Left ventricle myocardium inferior (tissue), 1 donor: ENCODE measurements at regions of chr17 and their contacts with region 1.

Region 1: DNA sequence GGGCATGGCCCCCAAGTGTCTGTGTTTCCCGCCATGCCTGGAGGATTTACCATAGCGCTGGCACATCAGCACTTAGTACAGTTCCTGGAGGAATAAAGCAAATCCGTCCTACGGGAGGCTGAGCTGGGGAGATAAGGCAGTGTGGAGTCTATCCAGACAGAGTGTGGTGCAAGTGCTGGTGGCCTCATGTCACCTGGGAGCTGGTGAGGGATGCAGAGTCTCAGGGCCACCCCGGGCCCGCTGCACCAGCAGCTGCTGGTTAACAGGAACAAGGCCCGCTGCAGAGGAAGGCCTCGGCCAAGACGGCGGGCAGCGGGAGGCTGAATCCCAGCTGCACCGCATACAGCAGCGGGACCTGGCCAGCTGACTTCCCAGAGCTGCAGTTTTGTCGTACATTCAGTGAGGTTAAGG is 57.3 kb upstream of the CDC42EP4 start:
- DNase-seq: peak; percentile 63
- H3K4me3 ChIP-seq: no peak overlapping the region
- H3K27ac ChIP-seq: peak overlapping the region; percentile 54
- H3K4me1 ChIP-seq: peaks cover 36% of the 10 kb centered on the region
- H3K27me3 ChIP-seq: peaks cover 7% of the 10 kb centered on the region
- CTCF ChIP-seq: no peak

Region 2: DNA sequence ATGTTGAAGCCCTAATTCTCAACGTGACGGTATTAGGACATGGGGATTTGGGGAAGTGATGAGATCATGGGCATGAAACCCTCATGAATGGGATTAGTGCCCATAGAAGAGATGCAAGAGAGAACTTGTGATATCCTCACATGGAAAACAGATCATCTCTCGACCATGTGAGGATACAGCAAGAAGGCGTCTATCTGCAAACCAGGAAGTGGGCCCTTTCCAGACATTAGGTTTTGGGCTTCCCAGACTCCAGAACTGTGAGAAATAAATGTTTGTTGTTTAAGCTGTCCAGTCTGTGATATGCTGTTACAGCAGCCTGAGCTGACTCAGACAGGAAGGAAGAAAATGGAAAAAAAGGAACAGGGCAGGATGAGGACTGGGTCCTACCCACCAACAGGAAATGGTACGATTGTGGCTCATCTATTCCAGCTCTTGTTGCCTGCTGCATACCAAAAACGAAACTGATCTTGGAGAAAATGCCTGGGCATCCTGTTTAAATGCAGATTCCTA is 226.2 kb before region 1 on chr17:
- intact Hi-C with region 1: no loop called
- DNase-seq: no peak
- H3K4me3 ChIP-seq: no peak overlapping the region
- H3K27ac ChIP-seq: peak overlapping the region; percentile 30
- H3K4me1 ChIP-seq: no peaks in the 10 kb centered on the region
- H3K27me3 ChIP-seq: peaks cover 35% of the 10 kb centered on the region
- CTCF ChIP-seq: no peak

Region 3: DNA sequence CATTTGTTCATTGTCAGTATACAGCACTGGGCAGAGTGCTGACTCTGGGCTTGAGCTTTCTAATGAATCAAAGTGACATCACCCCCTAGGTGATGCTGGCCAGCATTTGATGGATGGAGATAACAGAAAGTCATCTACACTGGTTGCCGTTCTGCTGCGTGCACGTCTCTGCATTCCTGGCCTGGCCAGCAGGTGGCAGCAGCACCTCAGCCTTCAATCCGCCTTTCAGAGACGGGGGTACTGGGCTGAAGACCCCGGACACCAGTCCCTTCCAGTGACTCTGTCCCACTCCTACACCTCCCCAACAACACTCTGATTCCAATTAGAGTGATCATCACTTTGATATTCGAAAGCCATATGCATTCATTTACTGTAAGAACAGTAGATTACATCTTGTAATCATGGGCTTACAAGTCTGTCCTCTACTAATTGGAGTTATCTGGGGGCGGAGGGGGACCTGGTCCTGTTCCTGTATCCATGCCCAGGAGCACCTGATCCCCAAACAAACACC is 113.4 kb before region 1 on chr17:
- intact Hi-C with region 1: loop called (anchors 2 kb)
- DNase-seq: peak; percentile 50
- H3K4me3 ChIP-seq: no peak overlapping the region
- H3K27ac ChIP-seq: no peak overlapping the region
- H3K4me1 ChIP-seq: peaks cover 7% of the 10 kb centered on the region
- H3K27me3 ChIP-seq: no peaks in the 10 kb centered on the region
- CTCF ChIP-seq: peak; percentile 99